Thyroid gland (tissue), 4 donors: ENCODE measurements at regions of chr5 and their contacts with region 1.

Region 1: GRCh38 chr5:72523960-72524582 is 16.9 kb upstream of the ZNF366 start:
- DNase-seq: no peak
- H3K4me3 ChIP-seq: no peak overlapping the region
- H3K27ac ChIP-seq: peak overlapping the region in 1 of 3 donors; percentile 32
- H3K4me1 ChIP-seq: peaks cover 5 to 9% of the 10 kb centered on the region in 2 donors
- H3K27me3 ChIP-seq: no peaks in the 10 kb centered on the region
- CTCF ChIP-seq: peak in 5 of 6 experiments; percentile 38 to 83 (median 64)
- POLR2A ChIP-seq: no peak

Region 2: DNA sequence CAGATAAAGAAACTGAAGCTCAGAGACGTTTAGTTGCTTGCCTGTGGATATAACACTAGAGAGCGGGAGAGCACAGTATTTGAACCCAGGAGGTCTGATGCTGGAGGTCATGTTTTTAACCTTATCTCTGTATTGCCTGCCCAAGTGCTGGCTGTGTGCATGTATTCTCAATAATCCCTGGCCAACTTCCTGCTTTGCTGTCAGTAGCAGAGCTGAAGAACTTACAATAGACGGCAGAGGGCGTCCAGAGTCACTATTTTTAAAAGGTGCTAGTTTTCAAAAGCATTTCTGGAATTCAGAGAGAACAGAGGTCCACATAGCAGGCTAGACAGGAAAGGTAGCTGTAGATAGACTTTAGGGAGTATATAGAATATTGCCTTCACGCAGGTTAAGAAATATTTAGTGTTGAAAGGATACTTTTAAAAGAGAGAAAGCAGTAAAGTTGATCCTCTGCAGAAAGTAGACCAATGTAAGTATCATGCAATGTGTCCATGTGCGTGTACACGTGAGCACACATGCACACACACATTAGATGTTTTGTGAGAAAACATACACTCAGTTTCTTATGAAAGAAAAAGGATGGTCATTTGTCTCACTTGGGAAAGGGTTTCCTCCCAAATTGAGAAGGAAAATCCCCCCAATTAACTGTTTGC is 157.6 kb before region 1 on chr5:
- intact Hi-C with region 1: loop called (anchors 5 kb)
- DNase-seq: peak; percentile 80
- H3K4me3 ChIP-seq: no peak overlapping the region
- H3K27ac ChIP-seq: no peak overlapping the region
- H3K4me1 ChIP-seq: peaks cover 5 to 9% of the 10 kb centered on the region in 2 donors
- H3K27me3 ChIP-seq: no peaks in the 10 kb centered on the region
- CTCF ChIP-seq: peak; percentile 41 to 93 (median 81)
- POLR2A ChIP-seq: no peak